Activated CD4-positive, alpha-beta T cell treated with anti-CD3 and anti-CD28 coated beads, Interleukin-2, amount 10 ng/mL, durations not matched to agents 24 days and 14 days (primary cell): ENCODE measurements at regions of chr1 and their contacts with region 1.

Region 1: DNA sequence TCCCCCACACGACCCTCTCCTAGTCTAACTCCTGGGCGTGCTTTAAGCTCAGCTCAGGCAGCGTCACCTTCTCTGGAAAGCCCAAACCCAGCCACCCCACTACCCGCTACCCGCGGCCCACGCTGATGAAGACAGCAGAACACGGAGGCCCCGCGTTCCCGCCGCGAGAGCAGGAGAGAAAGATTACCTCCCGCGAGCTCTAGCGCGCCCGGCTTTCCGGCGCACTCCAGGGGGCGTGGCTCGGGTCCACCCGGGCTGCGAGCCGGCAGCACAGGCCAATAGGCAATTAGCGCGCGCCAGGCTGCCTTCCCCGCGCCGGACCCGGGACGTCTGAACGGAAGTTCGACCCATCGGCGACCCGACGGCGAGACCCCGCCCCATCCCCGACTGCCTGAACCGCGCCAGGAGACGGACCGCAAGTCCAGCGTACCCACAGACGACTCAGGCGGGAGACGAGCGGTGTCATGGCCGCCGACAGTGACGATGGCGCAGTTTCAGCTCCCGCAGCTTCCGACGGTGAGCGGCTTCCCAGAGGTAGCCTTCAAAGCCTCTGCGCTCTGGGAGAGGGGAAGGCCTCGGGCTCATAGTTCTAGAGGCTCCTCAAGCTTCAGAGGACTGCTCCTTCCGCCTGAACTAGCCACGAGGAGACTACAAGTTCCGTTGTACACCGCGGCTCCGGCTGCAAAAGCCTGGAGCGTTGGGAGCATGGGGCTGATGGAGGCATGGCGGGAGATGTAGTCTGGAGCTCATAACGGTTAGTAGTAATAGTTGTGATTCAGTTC is at the starts of genes MUTYH and TOE1:
- DNase-seq: peak; percentile 98
- H3K4me3 Mint-ChIP-seq: peak within 1 kb of the TSS; percentile 98
- H3K27ac Mint-ChIP-seq: peak within 1 kb of the TSS; percentile 99
- H3K4me1 Mint-ChIP-seq: peaks cover 45% of the 10 kb centered on the region
- H3K27me3 Mint-ChIP-seq: no peaks in the 10 kb centered on the region
- total RNA-seq, gene MUTYH: 55.6 and 57.0 TPM in 2 replicates
- total RNA-seq, gene TOE1: 38.2 and 44.8 TPM in 2 replicates

Region 2: GRCh38 chr1:44799770-44800584 is 540.0 kb before region 1 on chr1 and contains the start of gene PLK3:
- intact Hi-C with region 1: loop called (anchors 2 kb)
- DNase-seq: peak; percentile 99
- H3K4me3 Mint-ChIP-seq: peak within 1 kb of the TSS; percentile 99
- H3K27ac Mint-ChIP-seq: peak within 1 kb of the TSS; percentile 100
- H3K4me1 Mint-ChIP-seq: peaks cover 35% of the 10 kb centered on the region
- H3K27me3 Mint-ChIP-seq: no peaks in the 10 kb centered on the region
- total RNA-seq, gene PLK3: 190 and 205 TPM in 2 replicates

Region 3: GRCh38 chr1:44985747-44986359 is 354.1 kb before region 1 on chr1:
- intact Hi-C with region 1: loop called (anchors 1 kb)
- DNase-seq: no peak
- H3K4me3 Mint-ChIP-seq: peak overlapping the region; percentile 96
- H3K27ac Mint-ChIP-seq: peak overlapping the region; percentile 89
- H3K4me1 Mint-ChIP-seq: peaks cover 17% of the 10 kb centered on the region
- H3K27me3 Mint-ChIP-seq: no peaks in the 10 kb centered on the region

Region 4: DNA sequence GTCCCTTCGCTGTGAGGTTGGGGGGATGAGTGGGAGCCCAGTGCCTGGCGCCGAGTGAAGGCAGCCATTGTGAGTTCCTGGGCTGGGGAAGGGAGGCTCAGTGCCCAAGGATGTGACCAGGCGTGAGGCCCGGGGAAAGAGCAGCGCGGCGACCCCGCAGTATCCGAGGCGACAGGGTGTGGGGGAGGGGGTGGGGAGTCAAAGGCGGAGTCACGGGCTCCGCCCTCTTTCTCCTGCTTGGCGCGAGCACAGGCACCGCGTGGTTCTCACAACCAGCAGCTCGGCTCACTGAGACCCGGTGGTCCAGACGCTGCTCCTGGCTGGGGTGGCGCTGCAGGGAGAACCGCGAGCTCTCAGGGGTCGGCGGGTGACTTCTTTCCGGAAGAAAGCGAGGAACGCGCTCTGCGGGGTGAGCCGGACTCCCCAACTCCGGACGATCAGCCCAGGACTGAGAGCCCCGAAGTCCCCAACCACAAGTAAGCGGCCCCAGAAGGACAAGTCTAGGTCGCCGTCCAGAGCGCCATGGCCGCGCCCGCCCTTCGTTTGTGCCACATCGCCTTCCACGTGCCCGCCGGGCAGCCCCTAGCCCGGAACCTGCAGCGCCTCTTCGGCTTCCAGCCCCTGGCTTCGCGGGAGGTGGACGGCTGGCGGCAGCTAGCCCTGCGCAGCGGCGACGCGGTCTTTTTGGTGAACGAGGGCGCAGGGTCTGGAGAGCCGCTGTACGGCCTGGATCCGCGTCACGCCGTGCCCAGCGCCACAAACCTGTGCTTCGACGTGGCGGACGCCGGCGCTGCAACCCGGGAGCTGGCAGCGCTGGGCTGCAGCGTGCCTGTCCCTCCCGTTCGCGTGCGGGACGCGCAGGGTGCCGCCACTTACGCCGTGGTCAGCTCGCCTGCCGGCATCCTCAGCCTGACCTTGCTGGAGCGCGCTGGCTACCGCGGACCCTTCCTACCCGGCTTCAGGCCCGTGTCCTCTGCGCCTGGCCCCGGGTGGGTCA is 13.1 kb before region 1 on chr1 and contains the start of gene HPDL:
- intact Hi-C with region 1: loop called (anchors 1 kb)
- DNase-seq: peak; percentile 86
- H3K4me3 Mint-ChIP-seq: peak within 1 kb of the TSS; percentile 86
- H3K27ac Mint-ChIP-seq: peak within 1 kb of the TSS; percentile 79
- H3K4me1 Mint-ChIP-seq: peaks cover 23% of the 10 kb centered on the region
- H3K27me3 Mint-ChIP-seq: no peaks in the 10 kb centered on the region
- total RNA-seq, gene HPDL: 39.6 and 39.8 TPM in 2 replicates

Region 5: DNA sequence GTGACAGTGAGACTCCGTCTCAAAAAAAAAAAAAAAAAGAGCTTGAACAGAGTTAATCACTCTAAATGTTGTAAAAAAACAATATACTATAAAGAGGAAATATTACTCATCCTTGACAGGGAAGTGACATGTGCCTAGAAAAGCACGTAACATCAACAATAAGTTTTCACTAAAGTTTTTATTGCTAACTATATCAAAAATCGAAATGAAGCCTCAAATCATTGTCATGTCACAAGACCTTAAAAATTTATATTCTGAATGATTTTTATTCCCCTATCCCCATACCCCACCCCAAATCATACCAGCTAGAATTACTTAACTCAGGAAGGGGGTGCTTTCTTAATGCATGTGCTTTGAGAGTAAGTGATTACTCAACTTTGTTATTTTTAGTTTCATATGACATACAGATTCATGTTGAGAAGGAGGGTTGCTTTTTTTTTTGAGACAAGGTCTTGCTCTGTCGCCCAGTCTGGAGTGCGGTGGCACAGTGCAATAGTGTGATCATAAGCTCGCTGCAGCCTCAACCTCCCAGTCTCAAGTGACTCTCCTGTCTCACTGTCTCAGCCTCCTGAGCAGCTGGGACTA is 53.8 kb after region 1 on chr1:
- intact Hi-C with region 1: no loop called
- DNase-seq: no peak
- H3K4me3 Mint-ChIP-seq: no peak overlapping the region
- H3K27ac Mint-ChIP-seq: peak overlapping the region; percentile 29
- H3K4me1 Mint-ChIP-seq: peaks cover 4% of the 10 kb centered on the region
- H3K27me3 Mint-ChIP-seq: no peaks in the 10 kb centered on the region

Region 6: GRCh38 chr1:45499415-45499769 is 159.4 kb after region 1 on chr1:
- intact Hi-C with region 1: loop called (anchors 1 kb)
- DNase-seq: peak; percentile 74
- H3K4me3 Mint-ChIP-seq: peak overlapping the region; percentile 95
- H3K27ac Mint-ChIP-seq: peak overlapping the region; percentile 90
- H3K4me1 Mint-ChIP-seq: peaks cover 30% of the 10 kb centered on the region
- H3K27me3 Mint-ChIP-seq: no peaks in the 10 kb centered on the region

Region 7: GRCh38 chr1:45521398-45522323 is 181.7 kb after region 1 on chr1 and contains the start of gene PRDX1:
- intact Hi-C with region 1: loop called (anchors 1 kb)
- DNase-seq: peak; percentile 99
- H3K4me3 Mint-ChIP-seq: peak within 1 kb of the TSS; percentile 99
- H3K27ac Mint-ChIP-seq: peak within 1 kb of the TSS; percentile 94
- H3K4me1 Mint-ChIP-seq: peaks cover 31% of the 10 kb centered on the region
- H3K27me3 Mint-ChIP-seq: peaks cover 2% of the 10 kb centered on the region
- total RNA-seq, gene PRDX1: 682 and 710 TPM in 2 replicates